ENCODE measurements at regions of chr12 and their contacts with region 1.

Region 1: DNA sequence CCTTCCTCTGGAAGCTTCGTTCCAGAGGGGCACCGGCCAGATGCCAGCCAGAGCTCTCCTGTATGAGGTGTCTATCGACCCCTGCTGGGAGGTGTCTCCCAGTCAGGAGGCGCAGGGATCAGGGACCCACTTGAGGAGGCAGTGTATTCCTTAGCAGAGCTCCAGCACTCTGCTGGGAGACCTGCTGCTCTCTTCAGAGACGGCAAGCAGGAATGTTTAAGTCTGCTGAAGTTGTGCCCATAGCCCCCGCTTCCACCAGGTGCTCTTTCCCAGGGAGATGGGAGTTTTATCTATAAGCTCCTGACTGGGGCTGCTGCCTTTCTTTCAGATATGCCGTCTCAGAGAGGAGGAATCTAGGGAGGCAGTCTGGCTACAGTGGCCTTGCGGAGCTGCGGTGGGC is 22.2 kb upstream of the NAV3 start:
- DNase-seq: no peak
- ATAC-seq: no peak
- H3K4me3 ChIP-seq: no peak overlapping the region
- H3K4me3 Mint-ChIP-seq: no peak overlapping the region
- H3K27ac ChIP-seq: no peak overlapping the region
- H3K27ac Mint-ChIP-seq: no peak overlapping the region
- H3K4me1 ChIP-seq: no peaks in the 10 kb centered on the region
- H3K4me1 Mint-ChIP-seq: no peaks in the 10 kb centered on the region
- H3K27me3 ChIP-seq: no peaks in the 10 kb centered on the region
- H3K27me3 Mint-ChIP-seq: no peaks in the 10 kb centered on the region

Region 2: GRCh38 chr12:77786675-77787074 is 21.9 kb before region 1 on chr12:
- CTCF ChIA-PET with region 1: no interaction called
- POLR2A ChIA-PET with region 1: no interaction called
- intact Hi-C with region 1: loop called in 1 of 2 experiments (anchors 2 kb)
- DNase-seq: no peak
- ATAC-seq: no peak
- H3K4me3 ChIP-seq: no peak overlapping the region
- H3K4me3 Mint-ChIP-seq: no peak overlapping the region
- H3K27ac ChIP-seq: no peak overlapping the region
- H3K27ac Mint-ChIP-seq: no peak overlapping the region
- H3K4me1 ChIP-seq: no peaks in the 10 kb centered on the region
- H3K4me1 Mint-ChIP-seq: no peaks in the 10 kb centered on the region
- H3K27me3 ChIP-seq: no peaks in the 10 kb centered on the region
- H3K27me3 Mint-ChIP-seq: no peaks in the 10 kb centered on the region

Region 3: GRCh38 chr12:78028426-78028825 is 219.9 kb after region 1 on chr12:
- CTCF ChIA-PET with region 1: no interaction called
- POLR2A ChIA-PET with region 1: no interaction called
- intact Hi-C with region 1: no loop called
- DNase-seq: no peak
- ATAC-seq: no peak
- H3K4me3 ChIP-seq: no peak overlapping the region
- H3K4me3 Mint-ChIP-seq: no peak overlapping the region
- H3K27ac ChIP-seq: no peak overlapping the region
- H3K27ac Mint-ChIP-seq: no peak overlapping the region
- H3K4me1 ChIP-seq: no peaks in the 10 kb centered on the region
- H3K4me1 Mint-ChIP-seq: no peaks in the 10 kb centered on the region
- H3K27me3 ChIP-seq: no peaks in the 10 kb centered on the region
- H3K27me3 Mint-ChIP-seq: no peaks in the 10 kb centered on the region